Psoas muscle (tissue), 8 donors: ENCODE measurements at regions of chr9 and their contacts with region 1.

Region 1: GRCh38 chr9:98002808-98003207 is 19.7 kb downstream of the ANP32B start:
- DNase-seq: no peak
- ATAC-seq: no peak
- H3K4me3 ChIP-seq: no peak overlapping the region
- H3K27ac ChIP-seq: no peak overlapping the region
- H3K4me1 ChIP-seq: peaks cover 18% of the 10 kb centered on the region
- H3K27me3 ChIP-seq: no peaks in the 10 kb centered on the region
- CTCF ChIP-seq: no peak

Region 2: GRCh38 chr9:98018347-98018746 is 15.5 kb after region 1 on chr9:
- intact Hi-C with region 1: loop called in 1 of 2 experiments (anchors 2 kb)
- DNase-seq: no peak
- ATAC-seq: peak; percentile 59 to 72 (median 63)
- H3K4me3 ChIP-seq: no peak overlapping the region
- H3K27ac ChIP-seq: peak overlapping the region; percentile 65
- H3K4me1 ChIP-seq: peaks cover 45% of the 10 kb centered on the region
- H3K27me3 ChIP-seq: no peaks in the 10 kb centered on the region
- CTCF ChIP-seq: no peak

Region 3: DNA sequence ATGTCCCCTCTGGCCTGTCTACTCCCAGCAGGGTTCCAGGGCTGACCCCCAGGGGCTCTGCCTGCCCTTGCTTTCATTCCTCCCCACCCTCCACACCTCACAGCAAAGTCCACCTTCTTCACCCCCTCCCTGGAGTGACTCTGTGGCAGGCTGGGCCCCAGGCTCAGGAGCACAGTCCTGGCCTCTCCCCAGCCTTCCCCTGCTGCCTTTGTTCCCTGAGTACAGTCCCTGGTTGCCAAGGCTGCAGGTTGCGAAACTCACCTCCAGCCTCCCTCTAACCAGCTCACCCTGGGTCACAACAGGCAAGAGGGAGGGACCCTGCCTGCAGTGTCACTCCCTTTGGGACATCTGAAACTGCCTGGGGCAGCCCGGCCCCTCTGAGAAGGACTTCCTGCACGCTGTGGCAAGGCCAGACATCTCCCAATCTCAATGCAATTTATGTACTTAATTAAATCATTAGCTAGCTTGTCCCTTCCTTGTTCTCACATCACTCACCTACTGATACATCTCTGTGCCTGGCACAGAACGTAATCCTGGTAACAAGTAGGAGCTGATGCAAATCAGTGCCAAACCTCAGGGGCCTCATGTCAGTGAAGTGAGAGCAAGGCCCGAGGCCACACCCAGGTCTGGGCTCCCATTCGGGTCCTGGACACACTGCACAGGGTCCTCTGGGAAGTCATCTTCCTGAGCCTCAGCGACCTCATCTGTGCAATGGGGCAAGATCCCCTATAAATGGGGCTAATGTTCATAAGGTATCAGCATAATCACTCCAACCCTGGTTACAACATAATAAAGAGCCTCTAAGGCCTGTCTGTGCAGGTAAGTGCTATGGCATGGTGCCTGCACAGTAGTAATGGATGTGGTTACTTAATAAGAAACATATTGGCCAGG is 143.5 kb after region 1 on chr9:
- intact Hi-C with region 1: no loop called
- DNase-seq: no peak
- ATAC-seq: no peak
- H3K4me3 ChIP-seq: no peak overlapping the region
- H3K27ac ChIP-seq: no peak overlapping the region
- H3K4me1 ChIP-seq: no peaks in the 10 kb centered on the region
- H3K27me3 ChIP-seq: no peaks in the 10 kb centered on the region
- CTCF ChIP-seq: no peak